IMR-90 (cell line): ENCODE measurements at regions of chr19 and their contacts with region 1.

Region 1: GRCh38 chr19:4867534-4868285 is at the start of gene PLIN3:
- DNase-seq: peak; percentile 93
- ATAC-seq: peak; percentile 95
- H3K4me3 ChIP-seq: peak within 1 kb of the TSS; percentile 76
- H3K27ac ChIP-seq: peak within 1 kb of the TSS; percentile 82
- H3K4me1 ChIP-seq: no peaks in the 10 kb centered on the region
- H3K27me3 ChIP-seq: no peaks in the 10 kb centered on the region
- CTCF ChIP-seq: no peak
- POLR2A ChIP-seq: no peak
- RAD21 ChIP-seq: no peak
- total RNA-seq, gene PLIN3: 246 and 289 TPM in 2 replicates

Region 2: GRCh38 chr19:4557971-4558941 is 309.5 kb before region 1 on chr19:
- CTCF ChIA-PET with region 1: no interaction called
- POLR2A ChIA-PET with region 1: no interaction called
- dilution Hi-C with region 1: no loop called
- in situ Hi-C with region 1: no loop called
- intact Hi-C with region 1: no loop called
- DNase-seq: no peak
- ATAC-seq: peak; percentile 87
- H3K4me3 ChIP-seq: no peak overlapping the region
- H3K27ac ChIP-seq: no peak overlapping the region
- H3K4me1 ChIP-seq: no peaks in the 10 kb centered on the region
- H3K27me3 ChIP-seq: no peaks in the 10 kb centered on the region
- CTCF ChIP-seq: peak; percentile 83
- POLR2A ChIP-seq: no peak
- RAD21 ChIP-seq: peak; percentile 70

Region 3: GRCh38 chr19:4811328-4812131 is 56.2 kb before region 1 on chr19:
- CTCF ChIA-PET with region 1: interaction called, 6 read pairs
- POLR2A ChIA-PET with region 1: no interaction called
- dilution Hi-C with region 1: no loop called
- in situ Hi-C with region 1: no loop called
- intact Hi-C with region 1: loop called (anchors 5 kb)
- DNase-seq: peak; percentile 45
- ATAC-seq: peak; percentile 33
- H3K4me3 ChIP-seq: no peak overlapping the region
- H3K27ac ChIP-seq: peak overlapping the region; percentile 11
- H3K4me1 ChIP-seq: peaks cover 2% of the 10 kb centered on the region; the same call in 1 of the 2 replicates
- H3K27me3 ChIP-seq: no peaks in the 10 kb centered on the region
- CTCF ChIP-seq: peak; percentile 71
- POLR2A ChIP-seq: no peak
- RAD21 ChIP-seq: peak; percentile 53

Region 4: GRCh38 chr19:4829001-4829712 is 38.6 kb before region 1 on chr19:
- CTCF ChIA-PET with region 1: no interaction called
- POLR2A ChIA-PET with region 1: interaction called, 20 read pairs
- dilution Hi-C with region 1: no loop called
- in situ Hi-C with region 1: no loop called
- intact Hi-C with region 1: no loop called
- DNase-seq: no peak
- ATAC-seq: no peak
- H3K4me3 ChIP-seq: no peak overlapping the region
- H3K27ac ChIP-seq: no peak overlapping the region
- H3K4me1 ChIP-seq: peaks cover 11% of the 10 kb centered on the region
- H3K27me3 ChIP-seq: no peaks in the 10 kb centered on the region
- CTCF ChIP-seq: no peak
- POLR2A ChIP-seq: no peak
- RAD21 ChIP-seq: no peak

Region 5: GRCh38 chr19:4897146-4897545 is 29.4 kb after region 1 on chr19:
- CTCF ChIA-PET with region 1: no interaction called
- POLR2A ChIA-PET with region 1: interaction called, 12 read pairs
- dilution Hi-C with region 1: no loop called
- in situ Hi-C with region 1: no loop called
- intact Hi-C with region 1: no loop called
- DNase-seq: no peak
- ATAC-seq: no peak
- H3K4me3 ChIP-seq: no peak overlapping the region
- H3K27ac ChIP-seq: no peak overlapping the region
- H3K4me1 ChIP-seq: peaks cover 3% of the 10 kb centered on the region; the same call in 1 of the 2 replicates
- H3K27me3 ChIP-seq: no peaks in the 10 kb centered on the region
- CTCF ChIP-seq: no peak
- POLR2A ChIP-seq: no peak
- RAD21 ChIP-seq: no peak

Region 6: DNA sequence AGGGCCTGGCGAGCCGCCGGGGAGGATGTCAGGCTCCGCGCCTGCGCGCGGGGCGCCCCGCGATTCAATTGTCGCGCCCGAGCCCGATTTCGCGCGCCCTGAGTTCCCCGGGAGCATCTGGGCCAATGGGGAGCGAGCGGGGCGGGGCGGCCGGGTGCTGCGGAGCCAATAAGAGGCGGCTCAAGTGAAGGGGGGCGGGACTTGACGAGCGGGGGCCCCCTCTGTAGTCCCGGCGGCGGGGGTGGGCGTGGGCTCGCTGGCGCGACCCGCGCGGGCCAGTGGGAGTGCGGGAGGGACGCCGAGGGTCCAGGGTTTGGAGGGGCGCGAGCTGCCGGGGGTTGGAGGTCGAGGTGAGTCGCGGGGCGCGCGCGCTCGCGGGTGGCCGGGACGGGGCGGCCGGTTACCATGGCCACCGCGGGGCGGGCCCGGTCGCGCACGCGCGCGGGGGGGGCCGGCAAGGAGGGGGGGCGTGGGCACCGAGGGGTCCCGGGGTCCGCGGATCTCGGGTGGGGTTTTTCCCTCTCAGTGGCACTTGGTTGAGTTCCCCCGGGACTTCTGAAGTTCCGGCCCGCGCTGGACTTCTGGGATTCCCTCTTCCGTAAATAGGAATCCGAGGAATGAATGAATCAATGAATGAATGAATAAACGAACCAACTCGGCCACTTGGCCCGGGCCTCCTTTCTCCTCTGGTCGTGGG is 42.3 kb after region 1 on chr19:
- CTCF ChIA-PET with region 1: interaction called, 5 read pairs
- POLR2A ChIA-PET with region 1: interaction called, 10 read pairs
- dilution Hi-C with region 1: no loop called
- in situ Hi-C with region 1: loop called (anchors 5 kb)
- intact Hi-C with region 1: loop called (anchors 1 kb)
- DNase-seq: peak; percentile 79
- ATAC-seq: peak; percentile 79
- H3K4me3 ChIP-seq: peak overlapping the region; percentile 87
- H3K27ac ChIP-seq: peak overlapping the region; percentile 91
- H3K4me1 ChIP-seq: peaks cover 28% of the 10 kb centered on the region
- H3K27me3 ChIP-seq: no peaks in the 10 kb centered on the region
- CTCF ChIP-seq: no peak
- POLR2A ChIP-seq: no peak
- RAD21 ChIP-seq: no peak

Region 7: DNA sequence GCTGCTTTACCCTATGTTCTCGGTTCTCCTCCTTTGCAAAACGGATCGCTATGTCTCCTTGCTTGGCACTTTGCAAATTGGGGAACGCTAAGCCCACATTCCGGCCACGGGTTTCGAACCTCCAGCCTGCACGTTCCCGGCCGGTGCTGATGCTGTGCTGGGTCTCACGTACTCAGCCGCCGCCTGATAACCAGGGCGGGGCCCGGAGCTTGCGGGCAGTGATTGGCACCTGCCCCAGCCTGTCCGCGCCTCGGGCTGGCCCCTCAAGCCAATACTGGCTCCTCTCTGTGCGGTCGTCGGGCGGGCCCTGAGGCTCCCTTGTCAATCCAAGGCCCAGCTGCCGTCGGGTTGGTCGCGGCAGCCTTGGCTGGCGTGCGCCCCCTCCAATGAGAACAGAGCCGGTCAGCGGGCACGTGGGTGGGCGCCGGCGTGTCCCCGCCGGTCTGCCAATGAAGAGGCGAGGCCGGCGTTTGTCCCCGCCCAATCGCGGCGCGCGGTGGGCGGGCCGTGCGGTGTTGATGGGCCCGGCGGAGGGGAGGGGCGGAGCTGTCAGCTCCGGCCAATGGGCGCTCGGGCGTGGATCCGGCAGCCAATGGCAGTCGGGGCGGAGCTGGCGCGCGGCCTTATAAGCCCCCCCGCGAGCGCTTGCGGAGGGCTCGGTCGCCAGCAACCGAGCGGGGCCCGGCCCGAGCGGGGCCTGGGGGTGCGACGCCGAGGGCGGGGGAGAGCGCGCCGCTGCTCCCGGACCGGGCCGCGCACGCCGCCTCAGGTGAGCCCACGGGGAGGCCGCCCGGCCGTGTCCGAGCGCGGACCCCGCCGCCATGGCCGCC is 101.0 kb after region 1 on chr19 and contains the start of gene KDM4B:
- CTCF ChIA-PET with region 1: no interaction called
- POLR2A ChIA-PET with region 1: no interaction called
- dilution Hi-C with region 1: no loop called
- in situ Hi-C with region 1: no loop called
- intact Hi-C with region 1: loop called (anchors 2 kb)
- DNase-seq: peak; percentile 99
- ATAC-seq: peak; percentile 93
- H3K4me3 ChIP-seq: peak within 1 kb of the TSS; percentile 73
- H3K27ac ChIP-seq: peak within 1 kb of the TSS; percentile 90
- H3K4me1 ChIP-seq: peaks cover 20% of the 10 kb centered on the region
- H3K27me3 ChIP-seq: no peaks in the 10 kb centered on the region
- CTCF ChIP-seq: no peak
- POLR2A ChIP-seq: peak; percentile 99
- RAD21 ChIP-seq: no peak
- total RNA-seq, gene KDM4B: 5.0 TPM in 2 replicates